Aorta (tissue), 5 donors: ENCODE measurements at regions of chr14 and their contacts with region 1.

Region 1: DNA sequence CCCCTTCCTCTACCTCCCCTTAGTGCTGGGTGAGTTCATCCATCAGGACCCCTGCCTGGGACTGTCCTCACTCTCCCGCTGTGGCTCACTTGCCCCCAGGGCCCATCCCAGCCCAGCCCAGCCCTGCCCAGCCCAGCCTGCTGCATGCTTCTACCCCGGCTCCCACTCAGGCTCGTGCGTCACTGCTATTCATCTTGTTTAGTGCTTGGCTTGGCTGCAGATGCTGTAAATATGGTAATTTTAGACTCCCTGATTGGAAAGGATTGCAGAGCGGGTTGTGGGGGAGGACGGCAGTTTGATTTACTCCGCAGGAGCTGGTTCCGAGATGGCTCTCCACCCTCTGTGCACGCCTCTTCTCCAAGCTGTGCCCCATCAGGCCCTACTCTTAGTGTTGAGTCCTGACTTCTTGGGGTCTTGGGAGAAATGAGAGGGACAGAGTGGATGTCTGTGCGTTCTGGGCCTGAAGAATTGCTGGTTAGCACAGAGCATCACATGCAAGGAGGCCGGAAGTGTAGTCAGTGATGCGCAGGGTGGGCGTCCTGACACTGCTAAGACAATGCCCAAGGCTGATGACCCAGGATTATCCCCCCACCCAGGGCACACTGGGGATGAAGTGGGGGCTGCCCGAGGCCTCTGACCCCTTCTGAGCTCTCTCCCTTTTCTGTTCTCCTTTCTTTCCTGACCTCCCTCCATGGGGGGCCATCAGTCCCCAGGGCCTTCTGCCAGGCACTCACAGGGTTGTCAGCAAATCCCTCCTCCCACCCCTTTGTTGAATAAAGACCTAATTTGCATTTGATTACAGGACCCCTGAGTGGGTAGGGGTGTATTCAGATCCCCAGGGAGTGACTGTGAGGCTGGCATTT is 244.4 kb downstream of the ZFP36L1 start:
- DNase-seq: peak; percentile 91 to 95
- ATAC-seq: peak; percentile 91
- H3K4me3 ChIP-seq: no peak overlapping the region
- H3K27ac ChIP-seq: peak overlapping the region; percentile 95 to 96
- H3K4me1 ChIP-seq: peaks cover 4 to 15% of the 10 kb centered on the region in 2 donors
- H3K27me3 ChIP-seq: no peaks in the 10 kb centered on the region

Region 2: DNA sequence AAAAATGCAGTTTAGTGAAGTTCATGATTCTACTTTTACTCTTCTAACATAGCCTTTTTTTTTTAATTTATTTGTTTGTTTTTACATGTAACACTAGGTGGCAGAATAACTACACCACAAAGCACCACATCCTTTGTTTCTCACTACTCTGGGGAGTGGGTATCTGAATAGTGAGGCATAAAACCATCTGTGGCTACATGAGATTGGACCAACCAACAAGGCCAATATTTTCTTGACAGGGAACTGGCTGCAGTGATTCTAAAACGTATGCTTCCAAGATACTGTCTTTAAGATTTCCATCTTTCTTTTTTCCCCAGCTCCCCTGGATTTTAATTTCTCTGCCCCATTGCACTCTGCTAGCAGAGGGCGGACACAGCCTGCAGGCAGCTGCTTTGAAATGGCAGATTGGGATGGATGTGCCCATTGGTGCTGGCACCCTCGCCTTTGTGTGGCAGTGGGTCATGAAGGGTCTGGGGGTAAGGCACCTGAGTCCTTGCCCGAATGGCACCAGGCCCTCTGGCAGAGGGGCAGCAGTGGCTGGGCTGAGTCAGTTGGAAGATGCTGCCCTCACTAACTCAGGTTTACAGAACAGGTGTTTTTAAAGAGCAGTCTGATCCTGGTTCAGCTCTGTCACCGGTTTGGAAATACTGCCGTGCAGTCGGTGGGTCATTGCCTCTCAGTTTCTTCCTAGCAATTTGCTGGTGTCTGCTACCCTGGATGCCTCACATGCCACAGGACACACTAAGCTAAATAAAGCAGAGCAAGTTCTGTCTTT is 299.8 kb before region 1 on chr14:
- intact Hi-C with region 1: loop called (anchors 2 to 10 kb)
- DNase-seq: peak; percentile 57 to 73
- ATAC-seq: peak; percentile 82
- H3K4me3 ChIP-seq: no peak overlapping the region
- H3K27ac ChIP-seq: peak overlapping the region in 1 of 2 donors; percentile 82
- H3K4me1 ChIP-seq: peaks cover 19 to 21% of the 10 kb centered on the region in 2 donors
- H3K27me3 ChIP-seq: no peaks in the 10 kb centered on the region

Region 3: DNA sequence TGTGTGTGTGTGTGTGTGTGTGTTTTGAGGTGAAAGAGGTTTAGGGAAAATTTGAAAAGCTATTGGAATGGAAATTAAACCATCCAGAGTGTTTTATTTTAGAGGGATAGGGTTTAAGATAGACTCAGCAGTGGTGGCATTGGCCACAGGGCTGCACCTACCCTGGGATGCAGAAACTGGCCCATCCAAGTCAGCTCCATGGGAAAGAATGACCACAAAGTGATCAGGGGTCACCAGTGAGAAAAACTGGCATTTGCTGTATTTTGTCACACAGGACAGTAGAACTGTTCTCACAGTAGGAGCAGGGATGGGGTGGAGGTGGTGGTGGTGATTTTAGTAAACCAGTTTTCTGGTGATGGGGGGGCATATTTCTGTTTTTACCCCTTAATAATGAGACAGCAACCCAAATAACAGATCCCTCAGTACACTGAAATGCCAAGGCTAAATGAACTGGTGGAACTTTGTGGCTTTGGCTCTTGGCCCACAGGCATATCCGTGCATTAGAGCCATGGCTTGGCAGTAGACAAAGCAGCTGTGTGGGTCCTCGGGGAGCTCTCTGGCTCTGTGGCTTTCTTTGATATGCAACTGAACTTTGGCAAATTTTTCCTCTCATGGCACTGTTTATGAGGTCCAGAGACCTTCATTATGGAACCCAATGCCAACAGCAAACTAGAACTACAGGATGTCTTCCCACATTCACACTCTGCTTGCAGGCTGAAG is 103.8 kb before region 1 on chr14:
- intact Hi-C with region 1: no loop called
- DNase-seq: peak in 1 of 2 donors; percentile 75
- ATAC-seq: peak; percentile 19
- H3K4me3 ChIP-seq: no peak overlapping the region
- H3K27ac ChIP-seq: no peak overlapping the region
- H3K4me1 ChIP-seq: peaks cover 0 to 2% of the 10 kb centered on the region in 2 donors
- H3K27me3 ChIP-seq: no peaks in the 10 kb centered on the region

Region 4: DNA sequence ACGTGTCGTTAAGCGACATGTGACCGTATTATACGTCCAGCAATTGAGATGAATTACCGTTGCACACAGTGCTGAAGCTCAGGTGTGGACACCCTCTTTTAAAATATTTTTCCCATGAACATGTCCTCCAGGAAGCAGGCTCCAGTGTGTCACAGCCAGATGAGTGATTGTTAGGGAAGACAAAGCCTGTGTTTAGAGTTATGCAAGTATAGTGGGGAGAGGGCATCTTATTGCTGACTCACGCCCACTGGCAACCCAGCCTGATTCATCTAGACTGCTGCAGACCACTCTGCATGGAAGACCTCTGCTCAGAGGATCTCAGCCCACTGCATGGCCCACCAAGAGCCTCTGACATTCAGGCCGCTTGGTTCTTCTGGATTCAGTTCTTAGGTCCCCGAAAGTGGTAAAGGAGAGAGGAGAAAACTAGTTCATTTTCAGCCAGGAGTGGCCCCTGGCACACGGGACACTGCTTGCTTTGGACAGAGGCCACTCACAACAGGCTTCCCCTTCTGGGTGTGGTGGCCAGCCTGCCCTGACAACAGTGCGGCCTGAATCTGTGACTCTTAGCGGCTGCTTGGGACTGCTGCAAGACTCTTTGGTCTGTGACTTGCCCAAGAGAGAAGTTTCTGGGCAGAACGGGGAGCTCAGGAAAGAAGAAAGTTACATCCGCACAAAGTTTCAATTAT is 21.9 kb before region 1 on chr14:
- intact Hi-C with region 1: loop called in 1 of 2 experiments (anchors 2 kb)
- DNase-seq: peak; percentile 85 to 90
- ATAC-seq: peak; percentile 78
- H3K4me3 ChIP-seq: no peak overlapping the region
- H3K27ac ChIP-seq: peak overlapping the region; percentile 62 to 88
- H3K4me1 ChIP-seq: peaks cover 0 to 4% of the 10 kb centered on the region in 2 donors
- H3K27me3 ChIP-seq: no peaks in the 10 kb centered on the region

Region 5: DNA sequence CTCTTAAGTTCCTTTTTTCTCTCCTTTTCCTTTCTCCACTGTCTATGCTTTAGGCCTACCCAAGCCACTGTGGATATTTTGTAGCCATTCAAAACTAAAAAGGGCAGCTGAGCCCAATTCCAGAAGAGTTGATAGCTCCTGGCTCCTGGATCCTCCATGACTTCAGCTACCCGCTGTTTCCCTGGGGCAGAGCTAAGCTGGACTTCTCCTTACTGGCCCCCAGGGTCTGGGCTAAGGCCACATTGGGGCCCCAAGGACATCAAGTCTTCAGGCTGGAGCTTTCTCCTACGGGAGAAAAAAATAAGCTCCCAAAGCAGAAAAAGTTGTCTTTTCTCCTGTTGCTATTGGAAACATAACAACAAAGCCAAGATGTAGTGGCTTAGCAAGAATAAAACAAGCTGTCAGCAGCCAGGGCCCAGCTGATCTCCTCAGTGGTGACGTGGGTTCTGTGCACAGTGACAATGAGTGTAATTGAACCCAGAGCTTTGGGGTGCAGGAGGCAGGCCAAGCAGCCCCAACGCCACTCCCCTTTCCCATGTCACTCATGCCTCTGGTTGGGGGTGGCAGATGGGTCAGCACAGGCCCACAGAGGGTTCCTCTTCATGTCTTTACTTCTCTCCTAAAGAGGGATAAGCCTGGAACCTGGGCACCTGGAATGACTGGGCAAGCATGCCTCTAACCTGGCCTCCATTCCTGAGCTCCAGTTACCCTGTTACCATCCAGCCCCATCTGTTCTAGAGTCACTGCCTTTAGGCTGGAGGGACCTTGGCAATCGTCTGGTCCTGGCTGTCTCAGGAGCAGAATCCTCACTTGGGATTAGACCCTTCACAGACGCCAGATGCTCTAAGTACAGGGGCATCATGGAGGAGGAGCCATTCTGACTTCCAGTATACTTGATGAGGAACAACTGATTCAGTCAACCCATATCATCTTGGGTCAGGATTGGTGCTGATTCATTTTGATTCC is 73.3 kb after region 1 on chr14:
- intact Hi-C with region 1: loop called (anchors 2 to 5 kb)
- DNase-seq: peak; percentile 83 to 86
- ATAC-seq: peak; percentile 89
- H3K4me3 ChIP-seq: no peak overlapping the region
- H3K27ac ChIP-seq: no peak overlapping the region
- H3K4me1 ChIP-seq: peaks cover 4% of the 10 kb centered on the region in 2 donors
- H3K27me3 ChIP-seq: no peaks in the 10 kb centered on the region

Region 6: GRCh38 chr14:68685419-68686204 is 137.2 kb after region 1 on chr14:
- intact Hi-C with region 1: loop called in 1 of 2 experiments (anchors 5 kb)
- DNase-seq: no peak
- ATAC-seq: no peak
- H3K4me3 ChIP-seq: no peak overlapping the region
- H3K27ac ChIP-seq: no peak overlapping the region
- H3K4me1 ChIP-seq: peaks cover 2 to 11% of the 10 kb centered on the region in 2 donors
- H3K27me3 ChIP-seq: no peaks in the 10 kb centered on the region

Region 7: GRCh38 chr14:68795597-68796417 is 247.4 kb after region 1 on chr14:
- intact Hi-C with region 1: loop called (anchors 5 kb)
- DNase-seq: peak; percentile 92 to 96
- ATAC-seq: peak; percentile 70
- H3K4me3 ChIP-seq: peak overlapping the region; percentile 82 to 95
- H3K27ac ChIP-seq: peak overlapping the region; percentile 100
- H3K4me1 ChIP-seq: no peaks in the 10 kb centered on the region
- H3K27me3 ChIP-seq: peaks cover 0 to 2% of the 10 kb centered on the region in 2 donors